Heart left ventricle (tissue), 16 donors: ENCODE measurements at regions of chr11 and their contacts with region 1.

Region 1: GRCh38 chr11:100719809-100720221 is 32.7 kb downstream of the ARHGAP42 start:
- DNase-seq: peak in 4 of 5 donors; percentile 54 to 75 (median 66)
- ATAC-seq: peak; percentile 91 to 98 (median 95)
- H3K4me3 ChIP-seq: peak overlapping the region in 2 of 12 donors; percentile 1 to 10
- H3K27ac ChIP-seq: peak overlapping the region; percentile 11 to 78 (median 65)
- H3K4me1 ChIP-seq: peaks cover 7 to 37% (median 21%) of the 10 kb centered on the region in 12 donors
- H3K27me3 ChIP-seq: no peaks in the 10 kb centered on the region
- CTCF ChIP-seq: no peak
- POLR2A ChIP-seq: no peak

Region 2: GRCh38 chr11:100647681-100648260 is 72.0 kb before region 1 on chr11:
- intact Hi-C with region 1: no loop called
- DNase-seq: no peak
- ATAC-seq: no peak
- H3K4me3 ChIP-seq: no peak overlapping the region
- H3K27ac ChIP-seq: no peak overlapping the region
- H3K4me1 ChIP-seq: no peaks in the 10 kb centered on the region
- H3K27me3 ChIP-seq: no peaks in the 10 kb centered on the region
- CTCF ChIP-seq: no peak
- POLR2A ChIP-seq: no peak

Region 3: DNA sequence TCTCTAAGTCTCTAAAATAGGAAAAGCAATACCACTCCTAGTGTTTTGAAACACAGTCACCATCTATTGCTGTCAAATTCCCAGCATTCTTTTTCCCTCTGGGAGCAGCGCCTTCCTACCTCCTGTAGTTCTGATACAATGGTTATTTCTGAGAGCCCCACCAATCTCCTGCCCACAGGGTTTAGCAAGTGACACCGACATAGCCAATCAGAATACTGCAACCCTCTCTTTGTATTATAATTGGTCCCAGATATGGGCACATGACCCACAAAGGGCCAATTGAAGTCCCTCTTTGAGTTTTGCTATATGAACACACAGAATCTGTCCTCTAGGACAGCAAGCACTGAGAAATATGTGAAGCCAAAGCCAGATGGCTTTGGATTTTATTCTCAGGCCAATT is 49.7 kb before region 1 on chr11:
- intact Hi-C with region 1: no loop called
- DNase-seq: no peak
- ATAC-seq: no peak
- H3K4me3 ChIP-seq: no peak overlapping the region
- H3K27ac ChIP-seq: no peak overlapping the region
- H3K4me1 ChIP-seq: no peaks in the 10 kb centered on the region
- H3K27me3 ChIP-seq: no peaks in the 10 kb centered on the region
- CTCF ChIP-seq: no peak
- POLR2A ChIP-seq: no peak

Region 4: GRCh38 chr11:100703801-100704575 is 15.8 kb before region 1 on chr11:
- intact Hi-C with region 1: no loop called
- DNase-seq: no peak
- ATAC-seq: no peak
- H3K4me3 ChIP-seq: no peak overlapping the region
- H3K27ac ChIP-seq: peak overlapping the region in 1 of 12 donors; percentile 15
- H3K4me1 ChIP-seq: peaks cover 0 to 15% (median 0%) of the 10 kb centered on the region in 12 donors
- H3K27me3 ChIP-seq: no peaks in the 10 kb centered on the region
- CTCF ChIP-seq: no peak
- POLR2A ChIP-seq: no peak

Region 5: GRCh38 chr11:100789500-100789899 is 69.7 kb after region 1 on chr11:
- intact Hi-C with region 1: loop called in 1 of 10 experiments (anchors 10 kb)
- DNase-seq: peak in 4 of 5 donors; percentile 41 to 71 (median 50)
- ATAC-seq: peak; percentile 56 to 84 (median 74)
- H3K4me3 ChIP-seq: no peak overlapping the region
- H3K27ac ChIP-seq: peak overlapping the region in 6 of 12 donors; percentile 16 to 43 (median 27)
- H3K4me1 ChIP-seq: peaks cover 0 to 50% (median 27%) of the 10 kb centered on the region in 12 donors
- H3K27me3 ChIP-seq: no peaks in the 10 kb centered on the region
- CTCF ChIP-seq: no peak
- POLR2A ChIP-seq: no peak